ENCODE measurements at regions of chr12 and their contacts with region 1.

Region 1: GRCh38 chr12:48092611-48093010 is 13.3 kb downstream of the SENP1 start:
- DNase-seq: no peak
- ATAC-seq: no peak
- H3K4me3 ChIP-seq: no peak overlapping the region
- H3K27ac ChIP-seq: no peak overlapping the region
- H3K4me1 ChIP-seq: no peaks in the 10 kb centered on the region
- H3K27me3 ChIP-seq: no peaks in the 10 kb centered on the region
- CTCF ChIP-seq: no peak
- EP300 ChIP-seq: no peak
- POLR2A ChIP-seq: no peak
- RAD21 ChIP-seq: no peak

Region 2: DNA sequence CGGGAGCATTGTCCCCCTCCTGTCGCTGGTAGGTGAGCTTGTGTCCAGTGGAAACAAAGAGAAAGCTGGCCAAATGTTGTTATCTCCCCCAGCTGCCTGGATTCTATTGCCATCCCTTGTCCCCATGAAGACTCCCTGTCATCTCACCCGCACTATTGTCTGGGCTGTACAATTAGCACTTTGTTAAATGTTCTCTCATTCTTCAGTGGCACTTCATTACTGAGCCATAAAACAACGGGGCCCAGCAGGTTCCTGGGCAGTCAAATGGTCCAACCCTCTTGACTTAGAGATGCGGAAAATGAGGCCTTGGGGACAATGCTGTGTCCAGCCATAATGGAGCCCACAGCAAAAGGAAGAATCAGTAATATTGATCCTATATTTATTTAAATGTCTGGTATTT is 75.1 kb before region 1 on chr12:
- CTCF ChIA-PET with region 1: no interaction called
- POLR2A ChIA-PET with region 1: no interaction called
- RAD21 ChIA-PET with region 1: no interaction called
- SMC1A ChIA-PET with region 1: no interaction called
- in situ Hi-C with region 1: no loop called
- intact Hi-C with region 1: no loop called
- DNase-seq: no peak
- ATAC-seq: no peak
- H3K4me3 ChIP-seq: no peak overlapping the region
- H3K27ac ChIP-seq: no peak overlapping the region
- H3K4me1 ChIP-seq: no peaks in the 10 kb centered on the region
- H3K27me3 ChIP-seq: peaks cover 5% of the 10 kb centered on the region in 2 experiments; a peak in 3 of 4 replicates
- CTCF ChIP-seq: no peak
- EP300 ChIP-seq: no peak
- POLR2A ChIP-seq: no peak
- RAD21 ChIP-seq: no peak

Region 3: DNA sequence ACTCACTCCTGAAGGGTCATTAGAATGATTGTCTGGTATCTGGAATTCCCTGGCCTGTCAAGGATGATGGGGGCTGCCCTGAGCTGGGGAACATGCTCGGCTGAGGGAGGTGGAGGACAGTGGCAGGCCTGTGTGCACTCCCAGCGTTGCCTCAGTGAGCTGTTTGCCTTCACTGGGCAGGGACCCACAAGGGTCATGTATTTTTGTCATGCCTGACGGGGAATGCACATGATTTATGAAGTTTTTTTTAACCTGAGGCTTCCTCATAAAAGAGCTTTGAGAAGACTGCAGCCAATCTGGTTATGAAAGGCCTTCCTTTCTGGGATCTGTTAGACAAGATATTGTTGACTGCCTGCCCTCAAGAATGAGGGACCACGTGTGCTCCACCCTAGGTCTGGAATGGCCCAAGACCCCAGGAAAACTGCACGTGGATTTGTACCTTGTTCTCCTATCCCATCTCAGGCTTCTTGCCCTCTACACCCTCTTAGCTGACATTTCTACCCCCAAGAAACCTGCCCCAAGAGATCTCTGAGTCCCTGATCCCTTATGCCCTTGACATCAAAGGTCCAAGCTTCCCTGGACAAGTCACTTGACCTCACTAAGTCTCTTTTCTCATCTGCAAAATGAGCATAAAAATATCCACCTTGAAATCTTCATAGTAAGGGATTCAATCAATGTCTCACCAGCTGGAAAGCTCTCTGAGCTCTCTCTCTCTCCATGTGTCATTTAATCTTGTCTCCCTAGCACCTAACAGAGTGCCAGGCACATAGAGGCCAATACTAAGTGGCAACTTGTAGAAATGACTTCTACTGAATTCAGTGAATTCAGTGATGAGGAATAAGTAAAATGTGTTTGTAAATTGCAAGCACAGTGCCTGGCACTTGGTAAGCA is 63.8 kb before region 1 on chr12:
- CTCF ChIA-PET with region 1: no interaction called
- POLR2A ChIA-PET with region 1: interaction called, 11 read pairs
- RAD21 ChIA-PET with region 1: no interaction called
- SMC1A ChIA-PET with region 1: no interaction called
- in situ Hi-C with region 1: no loop called
- intact Hi-C with region 1: no loop called
- DNase-seq: no peak
- ATAC-seq: no peak
- H3K4me3 ChIP-seq: no peak overlapping the region
- H3K27ac ChIP-seq: no peak overlapping the region
- H3K4me1 ChIP-seq: no peaks in the 10 kb centered on the region
- H3K27me3 ChIP-seq: peaks cover 0 to 2% of the 10 kb centered on the region in 2 experiments; a peak in 1 of 4 replicates
- CTCF ChIP-seq: no peak
- EP300 ChIP-seq: no peak
- POLR2A ChIP-seq: no peak
- RAD21 ChIP-seq: no peak